Activated B cell treated with CpG ODN at 0.5 μM for 24 hours (primary cell): ENCODE measurements at regions of chr2 and their contacts with region 1.

Region 1: DNA sequence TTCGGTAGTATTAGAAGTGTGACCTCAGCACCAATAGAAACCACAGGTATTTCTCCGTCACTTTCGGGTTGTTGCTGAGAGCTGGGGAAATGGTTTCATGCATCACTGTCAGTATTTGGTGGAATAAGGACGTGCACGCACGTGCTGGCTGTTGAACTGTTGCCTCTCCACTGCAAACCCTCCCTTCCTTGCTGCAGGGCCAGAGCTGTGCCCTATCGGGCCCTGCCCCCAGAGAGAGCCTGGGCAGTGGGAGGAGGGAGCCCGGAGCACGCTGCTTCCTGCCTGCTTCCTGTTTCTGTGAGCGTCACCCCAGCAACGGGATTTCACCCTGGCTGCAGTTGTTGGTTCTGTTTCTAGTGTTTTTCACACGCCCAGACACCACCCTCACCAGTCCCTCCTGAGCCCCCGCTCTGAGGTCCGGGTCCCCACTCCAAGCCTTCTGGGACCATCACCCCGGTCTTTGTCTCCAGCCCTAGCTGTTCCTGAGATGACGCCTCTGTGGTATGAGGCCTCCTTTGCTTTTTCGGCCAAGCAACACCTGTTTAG is 47.4 kb downstream of the LRRFIP1 start:
- DNase-seq: peak; percentile 80
- ATAC-seq: peak; percentile 77
- H3K4me3 Mint-ChIP-seq: peak overlapping the region; percentile 90
- H3K27ac Mint-ChIP-seq: peak overlapping the region; percentile 99
- H3K4me1 Mint-ChIP-seq: peaks cover 90% of the 10 kb centered on the region
- H3K27me3 Mint-ChIP-seq: no peaks in the 10 kb centered on the region
- CTCF ChIP-seq: no peak

Region 2: DNA sequence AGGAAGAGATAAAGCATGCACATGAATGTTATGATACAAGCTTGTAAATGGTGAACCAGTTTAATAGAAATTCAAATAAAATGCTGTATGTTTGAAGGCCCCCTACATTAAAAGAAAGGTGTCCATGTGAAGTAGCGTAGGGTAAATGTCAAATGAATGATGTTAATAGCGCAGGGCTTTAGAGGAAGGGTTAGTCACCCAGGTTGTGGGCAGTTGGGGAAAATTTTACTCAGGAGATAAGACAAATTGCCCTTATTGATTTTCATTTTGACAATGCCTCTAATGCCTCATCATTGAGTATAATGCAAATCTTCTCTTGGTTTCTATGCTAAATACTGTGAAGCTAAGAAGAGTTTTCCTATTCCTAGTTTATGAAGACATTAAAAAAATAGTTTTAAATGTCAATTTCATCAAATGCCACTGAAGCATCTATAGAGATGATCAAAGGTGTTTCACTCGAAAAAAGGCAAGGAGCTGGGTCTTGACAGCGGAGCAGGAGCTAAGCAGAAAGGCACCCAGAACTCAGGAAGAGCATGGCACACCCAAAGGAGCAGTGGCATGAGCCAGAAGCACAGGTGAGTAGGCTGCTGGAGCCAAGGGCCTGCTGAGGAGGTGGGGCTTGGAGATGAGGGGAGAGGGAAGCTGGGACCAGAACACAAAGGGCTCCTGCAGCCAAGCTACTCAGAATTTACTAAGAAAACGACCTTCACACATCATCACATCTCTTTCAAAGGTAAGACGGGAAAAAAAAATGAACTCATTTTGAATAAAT is 1234.5 kb before region 1 on chr2:
- CTCF ChIA-PET with region 1: no interaction called
- POLR2A ChIA-PET with region 1: no interaction called
- intact Hi-C with region 1: no loop called
- DNase-seq: no peak
- ATAC-seq: no peak
- H3K4me3 Mint-ChIP-seq: no peak overlapping the region
- H3K27ac Mint-ChIP-seq: no peak overlapping the region
- H3K4me1 Mint-ChIP-seq: no peaks in the 10 kb centered on the region
- H3K27me3 Mint-ChIP-seq: peaks cover 8% of the 10 kb centered on the region
- CTCF ChIP-seq: no peak

Region 3: DNA sequence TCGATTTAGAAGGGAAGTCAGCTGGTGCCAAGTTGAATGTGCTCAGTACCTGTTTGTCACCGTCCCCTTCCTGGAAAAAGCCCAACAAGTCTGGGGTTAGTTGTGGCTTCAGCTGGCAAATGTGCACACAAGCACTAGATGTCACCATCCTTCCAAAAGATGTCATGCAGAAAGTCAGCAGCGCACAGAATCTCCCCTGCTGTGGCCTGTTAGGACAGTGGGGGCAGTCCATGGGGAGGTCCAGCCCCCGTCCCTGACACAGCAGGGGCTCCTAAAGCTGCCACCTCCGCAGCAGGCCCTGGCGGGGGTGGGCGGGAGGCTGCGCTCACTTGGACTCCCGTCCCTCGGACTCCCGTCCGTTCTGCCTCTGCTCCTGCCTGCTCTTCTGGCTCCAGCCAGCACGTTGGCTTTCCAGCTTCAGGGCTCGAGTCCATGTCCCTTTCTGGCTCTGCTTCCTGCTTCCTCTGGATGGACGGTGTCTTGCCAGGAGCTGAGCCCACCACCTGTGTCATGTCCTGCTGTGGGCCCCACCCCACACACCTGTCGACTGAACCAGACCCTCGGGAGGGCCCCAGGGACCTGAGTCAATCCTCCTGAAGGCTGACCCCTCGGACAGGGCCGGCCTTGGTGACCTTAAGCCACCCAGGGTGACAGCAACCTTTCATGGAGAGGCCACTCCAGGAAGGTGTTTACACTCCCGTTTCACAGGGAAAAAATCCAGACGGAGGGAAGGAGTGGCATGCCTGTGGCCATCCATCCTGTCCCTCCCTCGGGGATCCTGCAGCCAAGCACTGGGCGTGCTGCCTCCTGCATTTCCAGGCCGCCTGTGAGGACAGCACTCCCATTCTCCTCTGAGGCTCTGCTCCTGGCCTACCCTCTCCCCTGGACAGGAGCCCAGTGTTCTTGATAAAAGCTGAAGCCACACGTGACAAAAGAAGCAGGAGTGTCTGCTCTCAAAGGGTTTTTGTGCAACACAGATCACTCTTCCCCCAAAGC is 92.8 kb before region 1 on chr2:
- CTCF ChIA-PET with region 1: interaction called, 5 read pairs
- POLR2A ChIA-PET with region 1: no interaction called
- intact Hi-C with region 1: loop called (anchors 1 kb)
- DNase-seq: no peak
- ATAC-seq: peak; percentile 49
- H3K4me3 Mint-ChIP-seq: no peak overlapping the region
- H3K27ac Mint-ChIP-seq: no peak overlapping the region
- H3K4me1 Mint-ChIP-seq: peaks cover 2% of the 10 kb centered on the region
- H3K27me3 Mint-ChIP-seq: peaks cover 10% of the 10 kb centered on the region
- CTCF ChIP-seq: no peak

Region 4: GRCh38 chr2:237691908-237692600 is 17.2 kb after region 1 on chr2:
- CTCF ChIA-PET with region 1: interaction called, 125 read pairs
- POLR2A ChIA-PET with region 1: interaction called, 241 read pairs
- intact Hi-C with region 1: loop called (anchors 1 kb)
- DNase-seq: peak; percentile 91
- ATAC-seq: peak; percentile 69
- H3K4me3 Mint-ChIP-seq: peak overlapping the region; percentile 84
- H3K27ac Mint-ChIP-seq: peak overlapping the region; percentile 91
- H3K4me1 Mint-ChIP-seq: peaks cover 80% of the 10 kb centered on the region
- H3K27me3 Mint-ChIP-seq: no peaks in the 10 kb centered on the region
- CTCF ChIP-seq: no peak

Region 5: DNA sequence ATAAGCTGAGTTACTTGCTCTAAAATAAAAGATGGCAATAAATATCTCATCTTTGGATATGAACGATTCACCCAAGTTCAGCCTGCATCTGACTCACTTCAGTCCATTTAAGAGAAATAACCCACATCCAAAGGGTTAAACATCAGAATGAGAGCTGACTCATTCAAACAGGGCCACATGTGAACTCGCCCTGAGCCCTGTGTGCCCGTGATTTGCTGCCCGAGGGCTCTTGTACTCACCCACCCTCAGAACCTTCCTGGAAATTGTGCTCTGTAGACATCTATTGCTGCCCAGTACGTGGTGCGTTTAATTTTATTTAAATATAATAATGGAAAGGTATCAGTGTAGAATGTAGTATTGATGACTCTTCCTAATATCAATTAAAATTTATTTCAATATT is 56.9 kb after region 1 on chr2:
- CTCF ChIA-PET with region 1: interaction called, 17 read pairs
- POLR2A ChIA-PET with region 1: interaction called, 5 read pairs
- intact Hi-C with region 1: loop called (anchors 1 kb)
- DNase-seq: no peak
- ATAC-seq: peak; percentile 44
- H3K4me3 Mint-ChIP-seq: no peak overlapping the region
- H3K27ac Mint-ChIP-seq: no peak overlapping the region
- H3K4me1 Mint-ChIP-seq: peaks cover 48% of the 10 kb centered on the region
- H3K27me3 Mint-ChIP-seq: no peaks in the 10 kb centered on the region
- CTCF ChIP-seq: no peak

Region 6: DNA sequence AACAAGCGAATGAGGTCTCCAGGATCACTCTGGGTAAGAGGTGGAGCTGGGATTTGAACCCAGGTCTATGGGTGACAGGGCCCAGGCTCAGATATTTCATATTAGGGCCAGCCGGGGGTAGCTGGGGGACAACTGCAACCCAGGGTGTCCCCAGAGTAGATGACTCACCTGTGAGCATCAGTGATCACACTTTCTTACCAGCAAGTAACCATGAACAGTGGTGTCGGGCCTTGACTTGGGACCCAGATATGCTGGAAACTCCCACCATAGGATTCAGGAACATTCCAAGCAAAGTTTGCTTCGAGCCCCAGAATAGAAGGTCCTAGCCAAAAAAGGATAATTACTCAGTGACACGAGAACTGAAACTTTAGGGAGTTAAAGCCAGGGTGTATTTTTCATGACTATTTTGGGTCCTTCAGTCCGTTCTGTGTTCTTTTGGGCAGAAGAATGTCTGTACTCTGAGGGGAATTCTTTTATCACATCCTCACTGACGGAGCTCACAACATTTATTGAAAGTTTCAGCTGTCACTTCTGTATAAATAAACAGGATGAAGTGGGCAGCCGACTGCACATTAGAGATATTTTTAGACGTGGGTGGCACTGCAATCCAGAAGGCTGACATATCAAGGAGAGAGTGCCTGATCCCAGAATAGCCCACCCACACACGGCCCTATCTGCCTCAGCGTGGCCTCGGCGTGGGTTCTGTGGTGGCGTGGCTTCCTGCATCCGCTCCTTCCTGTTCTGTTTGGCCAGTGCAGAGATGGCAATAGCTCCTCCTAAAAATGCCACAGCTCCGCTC is 230.2 kb after region 1 on chr2:
- CTCF ChIA-PET with region 1: no interaction called
- POLR2A ChIA-PET with region 1: no interaction called
- intact Hi-C with region 1: loop called (anchors 10 kb)
- DNase-seq: no peak
- ATAC-seq: peak; percentile 72
- H3K4me3 Mint-ChIP-seq: peak overlapping the region; percentile 55
- H3K27ac Mint-ChIP-seq: peak overlapping the region; percentile 88
- H3K4me1 Mint-ChIP-seq: peaks cover 42% of the 10 kb centered on the region
- H3K27me3 Mint-ChIP-seq: no peaks in the 10 kb centered on the region
- CTCF ChIP-seq: no peak

Region 7: GRCh38 chr2:238239872-238240751 is 565.3 kb after region 1 on chr2 and contains the start of gene HES6:
- CTCF ChIA-PET with region 1: no interaction called
- POLR2A ChIA-PET with region 1: no interaction called
- intact Hi-C with region 1: loop called (anchors 10 kb)
- DNase-seq: peak; percentile 77
- ATAC-seq: peak; percentile 86
- H3K4me3 Mint-ChIP-seq: peak within 1 kb of the TSS; percentile 86
- H3K27ac Mint-ChIP-seq: peak within 1 kb of the TSS; percentile 68
- H3K4me1 Mint-ChIP-seq: peaks cover 13% of the 10 kb centered on the region
- H3K27me3 Mint-ChIP-seq: peaks cover 12% of the 10 kb centered on the region
- CTCF ChIP-seq: no peak
- total RNA-seq, gene HES6: 4.4 and 5.0 TPM in 2 replicates

Region 8: GRCh38 chr2:239293775-239294430 is 1619.1 kb after region 1 on chr2:
- CTCF ChIA-PET with region 1: no interaction called
- POLR2A ChIA-PET with region 1: no interaction called
- intact Hi-C with region 1: no loop called
- DNase-seq: no peak
- ATAC-seq: peak; percentile 85
- H3K4me3 Mint-ChIP-seq: peak overlapping the region; percentile 28
- H3K27ac Mint-ChIP-seq: no peak overlapping the region
- H3K4me1 Mint-ChIP-seq: peaks cover 71% of the 10 kb centered on the region
- H3K27me3 Mint-ChIP-seq: peaks cover 4% of the 10 kb centered on the region
- CTCF ChIP-seq: no peak